Activated CD8-positive, alpha-beta T cell treated with anti-CD3 and anti-CD28 coated beads for 36 hours (primary cell): ENCODE measurements at regions of chr6 and their contacts with region 1.

Region 1: GRCh38 chr6:167350731-167351655 is 26.1 kb downstream of the TTLL2 start:
- DNase-seq: peak; percentile 97
- ATAC-seq: peak; percentile 86
- H3K4me3 Mint-ChIP-seq: peak overlapping the region; percentile 72
- H3K27ac Mint-ChIP-seq: peak overlapping the region; percentile 84
- H3K4me1 Mint-ChIP-seq: peaks cover 19% of the 10 kb centered on the region
- H3K27me3 Mint-ChIP-seq: peaks cover 32% of the 10 kb centered on the region
- CTCF ChIP-seq: peak; percentile 82

Region 2: DNA sequence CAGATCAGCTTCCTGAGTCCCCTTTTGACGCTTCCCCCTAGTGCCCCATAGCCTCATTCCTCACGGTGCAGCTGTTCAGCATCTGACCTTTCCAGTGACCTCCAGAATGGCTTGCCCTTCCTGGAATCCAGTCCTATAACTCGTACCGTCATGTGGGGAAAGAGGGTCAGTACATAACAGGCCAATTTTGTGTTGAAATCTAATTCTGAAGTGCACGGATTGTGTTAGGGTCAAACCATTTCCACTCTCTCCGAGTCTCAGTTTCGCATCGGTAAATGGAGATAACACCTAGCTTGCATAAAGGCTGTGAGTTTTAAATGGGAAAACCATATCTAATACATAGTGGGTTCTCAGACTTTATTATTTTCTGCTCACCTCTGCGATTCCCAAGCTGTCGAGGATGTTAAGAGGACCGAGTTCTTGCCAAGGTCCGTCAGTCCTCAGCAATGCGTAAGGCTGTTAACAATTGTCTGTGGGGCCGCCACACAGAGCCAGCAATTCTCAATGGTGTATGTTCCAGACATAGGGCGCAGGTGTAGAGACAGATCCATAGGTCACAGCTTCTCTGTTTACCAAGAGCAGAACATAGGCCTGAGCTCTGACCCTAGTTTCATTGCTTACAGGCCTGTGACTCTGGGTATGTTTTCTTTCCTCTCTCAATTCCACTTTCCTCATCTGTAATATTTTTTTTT is 273.6 kb before region 1 on chr6:
- CTCF ChIA-PET with region 1: no interaction called
- POLR2A ChIA-PET with region 1: no interaction called
- intact Hi-C with region 1: no loop called
- DNase-seq: no peak
- ATAC-seq: no peak
- H3K4me3 Mint-ChIP-seq: no peak overlapping the region
- H3K27ac Mint-ChIP-seq: no peak overlapping the region
- H3K4me1 Mint-ChIP-seq: peaks cover 24% of the 10 kb centered on the region
- H3K27me3 Mint-ChIP-seq: no peaks in the 10 kb centered on the region
- CTCF ChIP-seq: no peak

Region 3: DNA sequence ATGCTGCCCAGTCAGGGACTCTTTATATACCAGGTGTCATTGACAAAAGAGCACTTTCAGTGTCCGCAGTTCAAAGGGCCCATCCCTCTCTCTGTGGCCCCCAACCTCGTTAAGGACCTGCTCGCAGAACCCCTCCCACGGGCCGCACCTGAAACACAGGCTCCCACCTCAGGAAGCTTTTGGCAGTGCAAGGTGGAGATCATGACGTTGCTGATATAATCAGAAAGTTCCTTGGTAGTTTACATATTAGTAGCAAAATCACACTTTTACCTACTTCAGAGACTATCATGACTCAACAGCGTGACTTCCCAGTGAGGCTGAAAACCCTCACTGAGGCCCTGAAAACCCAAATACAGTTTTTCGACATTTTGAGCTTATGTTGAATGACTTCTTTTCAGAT is 22.0 kb before region 1 on chr6:
- CTCF ChIA-PET with region 1: interaction called, 16 read pairs
- POLR2A ChIA-PET with region 1: no interaction called
- intact Hi-C with region 1: no loop called
- DNase-seq: no peak
- ATAC-seq: peak; percentile 51
- H3K4me3 Mint-ChIP-seq: no peak overlapping the region
- H3K27ac Mint-ChIP-seq: no peak overlapping the region
- H3K4me1 Mint-ChIP-seq: peaks cover 3% of the 10 kb centered on the region
- H3K27me3 Mint-ChIP-seq: peaks cover 3% of the 10 kb centered on the region
- CTCF ChIP-seq: no peak

Region 4: DNA sequence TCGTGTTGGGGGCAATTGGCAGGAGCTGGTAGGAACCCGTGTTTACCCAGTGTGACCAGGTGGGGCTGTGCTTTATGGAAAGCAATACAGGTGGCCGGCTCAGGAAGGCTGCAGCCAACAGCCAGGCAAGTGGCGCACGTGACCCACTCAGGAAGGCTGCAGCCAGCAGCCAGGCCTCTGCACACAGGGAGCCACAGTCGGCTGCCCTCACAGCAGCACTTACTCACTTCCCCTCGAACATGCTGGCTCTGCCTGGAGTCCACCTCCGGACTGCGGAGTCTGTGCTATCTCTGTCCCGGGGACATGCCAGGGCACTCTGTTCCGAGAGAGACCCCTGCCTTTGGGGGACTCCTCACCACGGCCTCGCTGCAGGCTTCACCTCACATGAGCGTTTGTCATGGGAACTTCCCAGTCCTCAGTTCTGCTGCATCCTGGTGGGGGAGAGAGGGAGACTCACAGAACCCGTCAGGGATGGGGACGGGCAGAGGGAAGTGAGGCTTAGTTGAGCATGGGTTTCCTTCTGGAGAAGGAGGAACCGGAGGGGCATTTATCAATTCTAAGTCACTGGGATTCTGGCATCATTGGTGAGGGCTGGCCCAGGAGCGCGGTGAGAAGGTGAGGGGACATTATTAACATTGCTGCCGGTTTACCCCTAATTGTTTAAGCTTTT is 50.7 kb after region 1 on chr6:
- CTCF ChIA-PET with region 1: no interaction called
- POLR2A ChIA-PET with region 1: no interaction called
- intact Hi-C with region 1: no loop called
- DNase-seq: no peak
- ATAC-seq: no peak
- H3K4me3 Mint-ChIP-seq: no peak overlapping the region
- H3K27ac Mint-ChIP-seq: no peak overlapping the region
- H3K4me1 Mint-ChIP-seq: no peaks in the 10 kb centered on the region
- H3K27me3 Mint-ChIP-seq: peaks cover 4% of the 10 kb centered on the region
- CTCF ChIP-seq: no peak

Region 5: DNA sequence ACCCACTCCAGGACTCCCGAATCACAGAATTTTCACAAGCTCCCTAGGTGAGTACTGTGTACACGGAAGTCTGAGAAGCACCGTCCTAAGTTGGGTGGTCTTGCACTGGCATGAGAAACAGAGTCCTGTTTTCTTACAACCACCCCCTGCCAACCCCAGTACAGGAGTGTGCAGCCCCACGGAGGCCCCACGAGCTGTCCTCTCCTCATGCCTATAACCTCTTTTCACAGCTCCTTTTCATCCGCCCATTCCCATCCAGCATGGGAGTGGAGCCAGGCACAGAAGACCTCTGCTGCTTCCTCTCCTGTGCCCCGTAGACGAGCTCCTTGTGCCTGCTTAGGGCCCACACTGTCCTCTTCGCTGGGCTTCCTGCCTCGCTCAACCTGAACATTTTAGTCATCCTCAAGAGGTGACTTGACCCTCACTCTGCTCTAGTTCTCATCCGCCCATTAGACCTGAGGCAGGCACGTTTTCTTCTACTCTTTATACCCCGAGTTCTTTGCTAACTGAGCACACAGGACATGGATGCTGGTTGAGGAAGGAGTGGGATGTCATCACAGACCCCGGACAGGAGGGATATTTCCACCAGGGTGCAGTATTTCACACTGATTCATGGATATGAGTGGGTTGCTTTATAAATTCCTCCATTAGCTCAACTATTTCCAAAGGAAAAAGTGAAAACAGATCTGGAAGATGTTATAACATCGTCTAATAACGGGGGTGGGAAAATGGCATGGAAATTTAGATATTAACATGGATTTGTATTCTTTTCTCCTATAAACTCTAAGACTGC is 134.4 kb after region 1 on chr6:
- CTCF ChIA-PET with region 1: no interaction called
- POLR2A ChIA-PET with region 1: no interaction called
- intact Hi-C with region 1: no loop called
- DNase-seq: no peak
- ATAC-seq: no peak
- H3K4me3 Mint-ChIP-seq: no peak overlapping the region
- H3K27ac Mint-ChIP-seq: no peak overlapping the region
- H3K4me1 Mint-ChIP-seq: no peaks in the 10 kb centered on the region
- H3K27me3 Mint-ChIP-seq: peaks cover 1% of the 10 kb centered on the region
- CTCF ChIP-seq: peak; percentile 21